ENCODE measurements at regions of chrX and their contacts with region 1.

Region 1: DNA sequence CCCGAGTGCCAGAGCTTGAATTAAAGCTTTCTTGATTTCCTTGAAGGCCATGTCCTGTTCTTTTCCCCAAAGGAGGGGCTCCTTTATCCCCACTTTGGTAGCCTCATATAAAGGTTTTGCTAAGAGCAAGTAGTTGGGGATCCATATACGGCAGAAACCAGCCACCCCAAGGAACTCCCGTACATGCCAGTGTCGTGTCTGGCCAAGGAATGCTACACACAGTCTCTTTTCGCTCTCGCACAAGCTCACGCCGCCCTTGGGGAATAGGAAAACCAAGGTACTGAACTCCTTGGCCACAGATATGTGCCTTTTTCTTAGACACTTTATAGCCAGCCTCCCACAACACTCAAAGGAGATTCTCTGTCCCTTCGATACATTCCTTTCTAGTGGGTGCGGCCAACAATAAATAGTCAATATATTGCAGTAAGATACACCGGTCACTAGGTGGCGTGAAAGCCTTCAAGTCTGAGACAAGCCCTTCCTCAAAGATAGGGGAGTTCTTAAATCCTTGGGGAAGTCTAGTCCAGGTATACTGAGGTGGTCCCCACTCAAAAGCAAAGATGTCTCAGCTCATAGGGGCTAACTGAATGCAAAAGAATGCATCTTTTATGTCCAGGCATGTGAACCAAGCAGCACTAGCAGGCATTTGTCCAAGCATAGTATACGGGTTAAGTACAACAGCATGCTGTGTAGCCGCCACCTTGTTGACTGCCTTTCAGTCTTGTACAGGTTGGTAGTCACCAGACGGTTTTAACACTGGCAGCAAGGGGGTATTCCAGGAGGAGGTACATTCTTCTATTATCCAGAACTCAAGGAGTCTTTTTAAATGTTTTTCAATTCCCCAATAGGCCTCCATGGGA is 57.8 kb upstream of the XAGE1B start:
- DNase-seq: peak; percentile 0
- H3K4me3 Mint-ChIP-seq: no peak overlapping the region
- H3K27ac Mint-ChIP-seq: no peak overlapping the region
- H3K4me1 Mint-ChIP-seq: no peaks in the 10 kb centered on the region
- H3K27me3 Mint-ChIP-seq: peaks cover 1% of the 10 kb centered on the region

Region 2: GRCh38 chrX:52995135-52996020 is 420.7 kb after region 1 on chrX:
- intact Hi-C with region 1: loop called (anchors 2 kb)
- DNase-seq: peak; percentile 88
- H3K4me3 Mint-ChIP-seq: peak overlapping the region; percentile 89
- H3K27ac Mint-ChIP-seq: peak overlapping the region; percentile 95
- H3K4me1 Mint-ChIP-seq: peaks cover 21% of the 10 kb centered on the region
- H3K27me3 Mint-ChIP-seq: no peaks in the 10 kb centered on the region